Prostate gland (tissue), 2 donors: ENCODE measurements at regions of chr14 and their contacts with region 1.

Region 1: GRCh38 chr14:69726761-69727511 is 40.0 kb upstream of the SRSF5 start:
- DNase-seq: peak; percentile 63
- H3K4me3 ChIP-seq: peak overlapping the region; percentile 20 to 34
- H3K27ac ChIP-seq: peak overlapping the region; percentile 20 to 53
- H3K4me1 ChIP-seq: no peaks in the 10 kb centered on the region
- H3K27me3 ChIP-seq: no peaks in the 10 kb centered on the region
- CTCF ChIP-seq: peak; percentile 95 to 97 (median 96)
- POLR2A ChIP-seq: no peak

Region 2: DNA sequence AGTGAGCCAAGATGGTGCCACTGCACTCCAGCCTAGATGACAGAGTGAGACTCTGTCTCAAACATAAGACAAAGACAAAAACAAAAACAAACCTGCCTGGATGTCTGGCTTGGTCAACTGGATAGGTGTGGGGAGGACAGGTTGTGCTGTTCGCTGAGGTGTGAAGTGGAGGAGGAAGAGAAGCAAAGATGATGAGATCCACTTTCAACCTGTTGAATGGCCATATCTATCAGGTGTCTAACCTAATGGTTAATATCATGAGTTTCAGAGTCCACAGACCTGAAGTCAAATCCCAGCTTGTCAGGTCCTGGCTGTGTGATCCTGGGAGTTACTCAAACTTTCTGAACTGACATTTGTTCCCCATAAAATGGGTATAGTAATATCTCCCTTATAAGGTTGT is 142.5 kb before region 1 on chr14:
- intact Hi-C with region 1: loop called (anchors 2 kb)
- DNase-seq: no peak
- H3K4me3 ChIP-seq: no peak overlapping the region
- H3K27ac ChIP-seq: no peak overlapping the region
- H3K4me1 ChIP-seq: no peaks in the 10 kb centered on the region
- H3K27me3 ChIP-seq: no peaks in the 10 kb centered on the region
- CTCF ChIP-seq: no peak
- POLR2A ChIP-seq: no peak

Region 3: DNA sequence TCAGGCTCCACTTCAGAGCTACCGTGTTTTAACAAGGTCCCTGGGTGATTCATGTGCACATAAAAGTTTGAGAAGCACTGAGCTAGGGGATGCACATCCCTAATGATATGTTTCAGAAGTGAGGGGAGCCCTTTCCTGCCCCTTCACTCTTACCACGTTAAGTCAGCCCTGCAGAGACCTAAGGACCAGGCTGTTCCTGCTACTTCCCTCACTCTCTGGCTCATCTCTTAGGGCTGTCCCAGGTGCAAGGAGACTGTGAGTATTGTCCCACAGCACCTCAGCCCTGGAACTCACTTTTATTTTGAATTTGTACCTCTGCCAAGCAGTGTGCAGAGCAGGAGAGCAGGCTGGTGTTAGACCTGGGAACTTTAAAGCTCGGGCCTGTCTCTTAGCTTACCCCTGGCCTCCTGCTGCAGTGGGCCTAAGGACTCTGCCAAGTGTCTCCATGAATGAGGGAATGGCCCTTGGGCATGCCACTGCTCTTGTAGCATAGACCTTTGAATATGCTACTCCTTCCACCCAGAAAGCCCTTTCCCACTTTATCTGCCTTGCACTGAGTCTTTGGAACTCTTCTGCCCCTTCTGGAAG is 126.5 kb before region 1 on chr14:
- intact Hi-C with region 1: loop called (anchors 5 kb)
- DNase-seq: no peak
- H3K4me3 ChIP-seq: no peak overlapping the region
- H3K27ac ChIP-seq: no peak overlapping the region
- H3K4me1 ChIP-seq: no peaks in the 10 kb centered on the region
- H3K27me3 ChIP-seq: no peaks in the 10 kb centered on the region
- CTCF ChIP-seq: no peak
- POLR2A ChIP-seq: no peak